Right lobe of liver (tissue), 6 donors: ENCODE measurements at regions of chr9 and their contacts with region 1.

Region 1: DNA sequence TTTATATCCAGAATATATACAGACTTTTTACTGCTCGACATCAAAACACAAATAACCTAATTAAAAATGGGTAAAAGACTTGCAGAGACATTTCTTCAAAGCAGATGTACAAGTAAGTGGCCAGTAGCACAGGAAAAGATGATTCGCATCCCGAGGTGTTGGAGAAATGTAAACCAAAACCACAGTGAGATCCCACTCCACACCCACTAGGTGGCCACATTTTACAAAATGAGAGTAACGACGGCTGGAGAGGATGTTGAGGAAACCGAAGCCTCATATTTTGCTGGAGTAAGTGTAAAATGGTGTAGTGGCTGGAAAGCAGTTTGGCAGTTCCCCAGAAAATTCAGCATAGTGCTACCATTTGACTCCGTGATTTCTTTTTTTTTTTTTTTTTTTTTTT is 21.2 kb upstream of the GBGT1 start:
- DNase-seq: no peak
- ATAC-seq: peak; percentile 68 to 91 (median 78)
- H3K4me3 ChIP-seq: no peak overlapping the region
- H3K27ac ChIP-seq: no peak overlapping the region
- H3K4me1 ChIP-seq: no peaks in the 10 kb centered on the region
- H3K27me3 ChIP-seq: no peaks in the 10 kb centered on the region
- CTCF ChIP-seq: peak; percentile 46 to 58 (median 52)
- POLR2A ChIP-seq: no peak

Region 2: DNA sequence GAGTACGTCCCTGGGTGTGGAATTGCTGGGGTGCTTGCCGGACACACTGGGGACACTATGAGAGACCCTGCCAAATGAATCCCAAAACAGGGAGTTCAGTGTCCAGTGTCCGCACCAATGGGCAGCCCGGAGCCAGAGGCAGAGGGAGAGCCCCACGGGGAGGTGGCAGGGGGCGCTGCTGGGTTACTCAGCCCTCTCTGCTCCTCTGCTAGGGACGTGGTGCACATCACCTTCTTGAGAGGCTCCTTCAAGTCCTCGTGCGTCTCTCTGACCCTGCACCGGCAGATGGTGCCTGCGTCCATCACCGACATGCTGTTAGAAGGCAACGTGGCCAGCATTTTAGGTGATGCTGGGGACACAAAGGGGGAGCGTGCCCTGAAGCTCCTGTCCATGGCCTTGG is 212.0 kb after region 1 on chr9:
- intact Hi-C with region 1: loop called (anchors 5 to 10 kb)
- DNase-seq: no peak
- ATAC-seq: peak in 3 of 4 donors; percentile 24 to 52 (median 47)
- H3K4me3 ChIP-seq: no peak overlapping the region
- H3K27ac ChIP-seq: no peak overlapping the region
- H3K4me1 ChIP-seq: no peaks in the 10 kb centered on the region
- H3K27me3 ChIP-seq: no peaks in the 10 kb centered on the region
- CTCF ChIP-seq: peak in 2 of 4 donors; percentile 19 to 20
- POLR2A ChIP-seq: no peak

Region 3: GRCh38 chr9:133406480-133407307 is 221.7 kb after region 1 on chr9:
- intact Hi-C with region 1: loop called in 1 of 2 experiments (anchors 5 kb)
- DNase-seq: peak; percentile 74 to 82 (median 81)
- ATAC-seq: peak; percentile 84 to 91 (median 88)
- H3K4me3 ChIP-seq: no peak overlapping the region
- H3K27ac ChIP-seq: no peak overlapping the region
- H3K4me1 ChIP-seq: peaks cover 0 to 9% (median 2%) of the 10 kb centered on the region in 4 donors
- H3K27me3 ChIP-seq: no peaks in the 10 kb centered on the region
- CTCF ChIP-seq: peak; percentile 87 to 93 (median 92)
- POLR2A ChIP-seq: no peak

Region 4: DNA sequence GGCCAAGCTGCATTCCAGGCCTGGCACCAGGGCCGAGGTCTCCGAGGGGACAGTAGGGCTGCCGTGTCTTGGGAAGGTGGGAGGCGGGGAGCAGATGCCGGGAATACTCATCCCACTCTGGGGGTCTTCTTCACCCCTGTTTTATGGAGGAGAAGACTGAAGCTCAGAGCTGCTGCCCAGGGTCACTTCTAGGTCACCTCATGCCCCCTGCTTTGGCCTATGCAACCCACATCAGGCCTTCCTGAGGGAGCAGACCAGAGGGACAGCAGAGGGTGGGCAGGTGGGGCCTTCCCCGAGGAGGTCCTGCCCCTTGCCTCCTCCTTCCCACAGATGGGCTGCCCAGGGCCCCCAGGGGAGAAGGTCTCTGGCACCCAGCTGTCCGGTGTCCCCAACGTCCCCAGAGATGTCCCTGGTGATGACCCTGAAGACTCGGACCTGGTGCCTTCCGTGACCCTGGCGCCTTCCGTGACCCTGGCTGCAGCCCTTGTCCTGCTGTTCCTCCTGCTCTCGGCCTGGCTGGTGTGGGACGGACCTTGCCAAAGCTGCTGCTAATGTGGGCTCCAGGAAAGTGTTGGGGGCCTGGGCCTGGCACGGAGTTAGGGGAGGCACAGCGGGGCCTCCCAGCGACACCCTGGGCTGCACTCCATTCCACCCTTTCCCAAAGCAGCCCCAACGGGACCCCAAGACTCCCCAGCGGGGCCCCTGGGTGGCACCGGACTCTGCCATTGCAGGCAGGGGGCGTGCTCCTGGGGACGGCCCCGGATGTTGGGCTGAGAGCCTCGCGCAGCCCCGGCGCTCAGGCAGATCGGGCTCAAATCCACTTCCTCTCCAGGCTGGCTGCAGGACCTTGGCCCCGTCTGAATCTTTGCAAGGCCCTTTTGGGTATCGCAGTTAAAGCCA is 300.6 kb after region 1 on chr9:
- intact Hi-C with region 1: loop called (anchors 5 to 10 kb)
- DNase-seq: peak in 2 of 3 donors; percentile 22 to 51
- ATAC-seq: peak in 3 of 4 donors; percentile 5 to 11 (median 9)
- H3K4me3 ChIP-seq: no peak overlapping the region
- H3K27ac ChIP-seq: no peak overlapping the region
- H3K4me1 ChIP-seq: no peaks in the 10 kb centered on the region
- H3K27me3 ChIP-seq: no peaks in the 10 kb centered on the region
- CTCF ChIP-seq: no peak
- POLR2A ChIP-seq: no peak